Transverse colon (tissue), 4 donors: ENCODE measurements at regions of chr2 and their contacts with region 1.

Region 1: DNA sequence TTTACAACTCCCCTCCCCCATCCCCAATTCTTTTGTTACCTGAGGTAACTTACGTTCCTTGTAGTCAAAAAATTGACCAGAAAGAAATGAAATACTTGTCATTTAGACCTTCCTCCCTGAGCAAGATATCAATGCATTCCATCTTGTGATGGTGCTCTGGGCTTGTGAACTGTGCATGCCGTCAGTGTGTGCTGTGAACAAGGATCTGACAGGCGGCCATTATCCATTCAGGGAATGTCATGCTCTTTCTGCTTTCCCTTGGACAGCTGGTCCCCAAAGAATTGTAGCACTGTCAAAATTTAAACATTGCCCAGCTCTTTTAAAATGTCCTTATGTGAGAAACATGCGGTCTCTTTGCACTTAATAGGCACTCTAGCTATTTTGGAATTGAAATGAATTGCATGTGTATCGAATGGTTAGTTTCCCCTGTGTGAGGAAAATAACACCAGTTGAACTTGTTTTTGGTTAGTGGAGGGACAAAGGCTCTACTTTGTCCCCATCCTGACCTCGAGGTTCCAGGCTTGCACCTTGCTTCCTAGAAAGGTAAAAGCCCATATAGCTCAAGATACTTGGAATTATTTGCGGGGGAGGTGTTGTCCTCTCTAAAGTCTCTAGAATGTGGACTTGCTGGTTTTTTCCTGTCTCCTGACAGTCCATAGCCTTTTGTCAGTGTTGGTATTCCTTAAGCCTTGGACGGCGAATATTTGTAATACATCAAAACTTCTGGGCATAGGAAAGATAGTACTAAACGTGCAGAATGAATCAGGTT is 350.8 kb downstream of the NUP35 start:
- DNase-seq: no peak
- H3K4me3 ChIP-seq: no peak overlapping the region
- H3K27ac ChIP-seq: no peak overlapping the region
- H3K4me1 ChIP-seq: no peaks in the 10 kb centered on the region
- H3K27me3 ChIP-seq: no peaks in the 10 kb centered on the region
- CTCF ChIP-seq: no peak
- EP300 ChIP-seq: no peak
- POLR2A ChIP-seq: no peak

Region 2: GRCh38 chr2:183459466-183459865 is 15.6 kb before region 1 on chr2:
- in situ Hi-C with region 1: no loop called
- intact Hi-C with region 1: no loop called
- DNase-seq: no peak
- H3K4me3 ChIP-seq: no peak overlapping the region
- H3K27ac ChIP-seq: no peak overlapping the region
- H3K4me1 ChIP-seq: no peaks in the 10 kb centered on the region
- H3K27me3 ChIP-seq: no peaks in the 10 kb centered on the region
- CTCF ChIP-seq: no peak
- EP300 ChIP-seq: no peak
- POLR2A ChIP-seq: no peak

Region 3: GRCh38 chr2:183505911-183506310 is 30.8 kb after region 1 on chr2:
- in situ Hi-C with region 1: no loop called
- intact Hi-C with region 1: loop called (anchors 1 kb)
- DNase-seq: no peak
- H3K4me3 ChIP-seq: no peak overlapping the region
- H3K27ac ChIP-seq: no peak overlapping the region
- H3K4me1 ChIP-seq: no peaks in the 10 kb centered on the region
- H3K27me3 ChIP-seq: no peaks in the 10 kb centered on the region
- CTCF ChIP-seq: no peak
- EP300 ChIP-seq: no peak
- POLR2A ChIP-seq: no peak

Region 4: GRCh38 chr2:185466915-185467314 is 1991.8 kb after region 1 on chr2:
- in situ Hi-C with region 1: no loop called
- intact Hi-C with region 1: no loop called
- DNase-seq: no peak
- H3K4me3 ChIP-seq: no peak overlapping the region
- H3K27ac ChIP-seq: no peak overlapping the region
- H3K4me1 ChIP-seq: no peaks in the 10 kb centered on the region
- H3K27me3 ChIP-seq: no peaks in the 10 kb centered on the region
- CTCF ChIP-seq: no peak
- EP300 ChIP-seq: no peak
- POLR2A ChIP-seq: no peak